Astrocyte of the cerebellum (primary cell): ENCODE measurements at regions of chr9 and their contacts with region 1.

Region 1: DNA sequence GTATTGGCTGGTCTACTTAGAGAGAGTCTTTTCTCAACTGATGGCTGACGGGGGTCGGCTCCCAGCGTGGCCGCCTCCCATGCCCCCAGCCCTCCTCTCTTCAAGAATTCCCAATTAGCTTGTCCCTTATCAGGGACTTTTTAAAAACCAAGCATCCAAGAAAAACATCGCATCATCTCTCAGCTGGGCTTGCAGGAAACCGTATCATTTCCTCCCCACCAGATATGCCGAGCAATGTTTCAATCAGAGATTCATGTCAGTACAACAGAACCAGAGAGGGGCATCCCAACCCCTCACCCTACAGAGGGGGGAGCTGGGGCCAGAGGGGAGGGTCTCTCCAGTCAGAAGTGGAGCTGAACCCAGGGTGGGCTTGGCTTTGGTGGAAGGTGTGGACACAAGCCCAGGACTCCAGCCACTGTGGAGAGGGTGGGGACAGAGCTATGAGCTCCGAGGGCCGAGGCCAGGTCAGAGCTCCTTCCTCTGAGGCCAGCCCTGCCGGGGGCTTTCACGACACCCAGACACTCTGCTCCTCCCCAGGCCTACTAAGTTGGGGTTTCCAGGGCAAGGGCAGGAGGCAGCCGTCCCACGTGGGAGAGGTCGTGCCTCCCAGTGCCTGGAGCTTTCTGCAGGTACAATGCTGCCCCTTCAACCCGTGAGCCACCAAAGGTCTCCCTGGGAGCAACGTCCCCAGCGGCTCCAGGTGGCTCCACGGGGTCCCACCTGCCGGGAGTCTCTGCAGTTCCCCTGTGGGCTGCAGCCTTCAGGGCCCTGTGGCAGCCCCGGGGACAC is 39.0 kb upstream of the TMEM250 start:
- DNase-seq: no peak
- H3K4me3 ChIP-seq: no peak overlapping the region
- CTCF ChIP-seq: no peak

Region 2: DNA sequence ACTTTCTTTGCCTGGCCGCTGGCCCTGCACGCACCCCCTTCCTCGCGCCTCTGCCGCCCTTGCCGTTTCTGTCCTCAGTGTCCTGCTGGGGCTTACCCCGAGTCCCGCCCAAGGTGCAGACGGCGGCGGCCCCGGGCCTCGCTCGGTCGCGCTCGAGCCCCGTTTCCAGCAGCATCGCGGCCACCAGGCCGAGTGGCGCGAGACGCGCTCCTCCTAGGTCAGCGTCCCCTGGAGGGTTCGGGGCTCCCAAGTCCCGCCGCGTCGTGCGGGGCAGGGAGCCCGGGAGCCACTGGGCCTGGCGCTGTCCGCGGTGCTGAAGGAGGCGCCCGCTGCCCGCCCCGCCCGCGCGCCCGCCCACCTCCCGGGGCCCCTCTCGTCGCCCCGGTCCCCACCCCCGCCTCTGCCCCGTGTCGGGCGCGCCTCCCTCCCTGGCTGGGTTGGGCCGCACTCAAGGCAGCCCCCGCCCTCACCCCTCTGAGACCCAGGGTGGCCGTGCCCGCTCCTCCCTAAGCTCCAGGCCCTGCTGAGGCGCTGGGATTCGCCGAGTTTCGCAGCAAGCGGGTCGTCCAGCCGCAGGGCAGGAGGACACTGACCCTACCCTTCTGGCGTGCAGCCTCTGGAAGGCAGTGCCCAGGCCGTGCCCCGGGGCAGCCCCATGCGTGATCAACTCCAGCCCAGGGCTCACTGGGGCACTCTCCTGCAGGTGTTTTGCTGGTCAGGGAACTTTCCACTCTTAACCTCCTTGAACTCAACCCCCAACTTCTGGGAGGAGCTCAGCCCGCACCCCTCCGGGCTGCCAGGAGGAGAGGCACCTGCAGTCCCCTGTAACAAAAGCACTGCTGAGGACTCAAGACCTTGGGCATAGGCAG is 47.4 kb after region 1 on chr9 and contains the start of gene LHX3:
- in situ Hi-C with region 1: loop called (anchors 5 kb)
- DNase-seq: no peak
- H3K4me3 ChIP-seq: no peak within 1 kb of the TSS
- CTCF ChIP-seq: no peak